ENCODE measurements at regions of chr10 and their contacts with region 1.

Region 1: DNA sequence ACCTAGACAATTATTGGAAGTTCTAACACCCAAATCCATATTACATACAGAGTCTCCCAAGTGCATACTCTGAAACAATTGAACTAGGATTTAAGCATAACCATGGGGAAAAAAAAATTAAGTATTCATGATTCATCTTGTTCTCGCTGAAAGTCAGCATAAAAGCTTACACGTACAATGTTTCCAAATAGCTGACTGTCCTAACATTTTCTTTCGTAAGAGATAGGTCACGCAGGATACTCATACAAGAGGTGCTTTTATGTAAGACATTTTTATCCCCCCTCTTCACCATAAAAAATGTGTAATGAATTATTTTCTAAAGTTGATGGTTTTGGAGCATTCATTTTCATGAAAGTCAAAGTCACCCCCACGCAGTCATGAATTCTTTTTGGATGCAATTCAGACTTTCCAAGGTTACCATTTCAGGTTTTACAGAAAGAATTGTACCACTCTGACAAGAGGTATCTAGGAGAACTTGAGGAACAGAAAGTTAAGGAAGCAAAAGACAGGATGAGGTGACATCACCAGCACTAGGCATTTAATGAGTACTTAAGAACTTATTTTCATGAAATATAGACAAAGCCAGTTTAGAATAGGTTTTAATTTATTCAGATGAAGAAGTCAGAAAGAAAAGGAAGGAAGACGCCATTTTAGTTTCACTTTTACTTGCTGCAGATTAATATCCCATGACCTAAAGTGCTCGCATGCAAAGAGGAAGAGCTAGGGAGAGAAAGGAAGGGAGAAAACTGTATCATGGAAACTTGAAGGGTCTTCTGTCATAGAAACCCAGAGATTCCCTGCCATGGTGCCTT is 55.8 kb downstream of the TMEM26 start:
- DNase-seq: peak; percentile 87 to 96 (median 94)
- H3K4me3 ChIP-seq: peak overlapping the region; percentile 23 to 61 (median 50)
- H3K4me3 Mint-ChIP-seq: peak overlapping the region; percentile 45 to 71
- H3K27ac ChIP-seq: peak overlapping the region; percentile 45 to 97
- H3K27ac Mint-ChIP-seq: peak overlapping the region; percentile 95 to 98 (median 97)
- H3K4me1 ChIP-seq: peaks cover 29% of the 10 kb centered on the region in 2 donors
- H3K4me1 Mint-ChIP-seq: peaks cover 32% of the 10 kb centered on the region
- H3K27me3 ChIP-seq: no peaks in the 10 kb centered on the region
- H3K27me3 Mint-ChIP-seq: no peaks in the 10 kb centered on the region
- CTCF ChIP-seq: no peak

Region 2: DNA sequence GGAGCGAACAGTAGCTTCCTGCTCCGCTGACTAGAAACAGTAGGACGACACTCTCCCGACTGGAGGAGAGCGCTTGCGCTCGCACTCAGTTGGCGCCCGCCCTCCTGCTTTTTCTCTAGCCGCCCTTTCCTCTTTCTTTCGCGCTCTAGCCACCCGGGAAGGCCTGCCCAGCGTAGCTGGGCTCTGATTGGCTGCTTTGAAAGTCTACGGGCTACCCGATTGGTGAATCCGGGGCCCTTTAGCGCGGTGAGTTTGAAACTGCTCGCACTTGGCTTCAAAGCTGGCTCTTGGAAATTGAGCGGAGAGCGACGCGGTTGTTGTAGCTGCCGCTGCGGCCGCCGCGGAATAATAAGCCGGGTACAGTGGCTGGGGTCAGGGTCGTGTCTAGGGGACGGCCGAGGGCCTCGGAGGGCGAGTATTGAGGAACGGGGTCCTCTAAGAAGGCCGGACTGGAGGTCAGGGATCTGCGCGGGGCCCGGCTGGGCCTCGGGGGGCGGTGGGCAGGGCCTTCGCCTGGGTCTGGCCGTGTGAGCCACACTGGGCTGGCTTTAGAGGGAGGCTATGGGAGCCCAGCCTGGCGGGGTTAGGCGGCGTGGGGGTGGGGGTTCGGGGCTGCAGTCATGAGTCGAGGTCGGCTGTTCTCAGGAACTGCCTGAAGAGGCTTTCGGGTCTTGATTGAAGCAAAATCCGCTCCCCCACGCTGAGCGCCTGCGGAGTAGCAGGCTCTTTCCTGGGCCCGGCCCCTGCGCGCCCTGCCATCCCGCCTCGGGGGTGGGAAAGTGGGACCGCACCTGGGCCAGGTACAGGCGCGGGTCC is 619.0 kb before region 1 on chr10 and contains the start of gene CDK1:
- intact Hi-C with region 1: loop called in 1 of 2 experiments (anchors 10 kb)
- DNase-seq: peak; percentile 90 to 96 (median 96)
- H3K4me3 ChIP-seq: peak within 1 kb of the TSS; percentile 66 to 95 (median 92)
- H3K4me3 Mint-ChIP-seq: peak within 1 kb of the TSS; percentile 93 to 97
- H3K27ac ChIP-seq: peak within 1 kb of the TSS in 1 of 2 donors; percentile 60
- H3K27ac Mint-ChIP-seq: peak within 1 kb of the TSS; percentile 54 to 91 (median 85)
- H3K4me1 ChIP-seq: peaks cover 19 to 20% of the 10 kb centered on the region in 2 donors
- H3K4me1 Mint-ChIP-seq: peaks cover 27% of the 10 kb centered on the region
- H3K27me3 ChIP-seq: no peaks in the 10 kb centered on the region
- H3K27me3 Mint-ChIP-seq: peaks cover 0 to 1% (median 0%) of the 10 kb centered on the region in 3 donors
- CTCF ChIP-seq: no peak
- polyA plus RNA-seq, gene CDK1: 0.08 to 0.21 (median 0.09) TPM

Region 3: DNA sequence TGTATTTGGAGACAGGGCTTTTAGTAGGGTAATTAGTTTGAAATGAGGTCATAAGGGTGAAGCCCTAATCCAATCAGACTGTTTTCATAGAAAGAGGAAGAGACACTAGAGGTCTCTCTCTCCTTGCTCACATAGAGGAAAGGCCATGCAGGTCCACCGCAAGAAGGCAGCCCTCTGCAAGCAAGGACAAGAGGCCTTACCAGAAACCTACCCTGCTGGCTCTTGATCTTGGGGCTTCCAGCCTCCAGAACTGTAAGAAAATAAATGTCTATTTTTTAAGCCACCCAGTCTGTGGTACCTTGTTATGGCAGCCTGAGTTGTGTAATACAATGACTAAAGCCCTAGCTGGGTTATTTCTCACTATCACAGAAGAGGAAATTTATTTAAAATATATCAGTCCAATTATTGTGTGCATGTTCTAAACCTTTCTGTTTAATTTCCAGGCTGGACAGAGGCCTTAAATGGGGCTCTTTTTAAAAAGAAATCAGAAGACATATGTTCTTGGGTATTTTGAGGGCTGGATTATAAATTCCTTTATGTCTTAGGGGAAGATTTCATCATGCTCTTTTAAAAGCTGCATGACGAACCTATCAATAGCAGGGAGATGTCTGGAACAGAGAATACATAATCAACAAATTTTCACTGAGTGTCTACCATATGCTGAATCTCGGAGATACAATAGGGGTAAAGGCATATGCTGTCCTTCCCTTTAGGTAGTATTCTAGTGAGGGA is 68.7 kb after region 1 on chr10:
- intact Hi-C with region 1: loop called (anchors 2 to 5 kb)
- DNase-seq: peak; percentile 23 to 71 (median 41)
- H3K4me3 ChIP-seq: no peak overlapping the region
- H3K4me3 Mint-ChIP-seq: no peak overlapping the region
- H3K27ac ChIP-seq: peak overlapping the region in 1 of 2 donors; percentile 55
- H3K27ac Mint-ChIP-seq: peak overlapping the region; percentile 51 to 90 (median 85)
- H3K4me1 ChIP-seq: peaks cover 20 to 23% of the 10 kb centered on the region in 2 donors
- H3K4me1 Mint-ChIP-seq: peaks cover 21% of the 10 kb centered on the region
- H3K27me3 ChIP-seq: no peaks in the 10 kb centered on the region
- H3K27me3 Mint-ChIP-seq: peaks cover 0 to 2% (median 2%) of the 10 kb centered on the region in 3 donors
- CTCF ChIP-seq: no peak

Region 4: GRCh38 chr10:61567729-61568128 is 170.3 kb after region 1 on chr10:
- intact Hi-C with region 1: no loop called
- DNase-seq: no peak
- H3K4me3 ChIP-seq: no peak overlapping the region
- H3K4me3 Mint-ChIP-seq: no peak overlapping the region
- H3K27ac ChIP-seq: no peak overlapping the region
- H3K27ac Mint-ChIP-seq: peak overlapping the region in 1 of 7 donors; percentile 28
- H3K4me1 ChIP-seq: no peaks in the 10 kb centered on the region
- H3K4me1 Mint-ChIP-seq: peaks cover 3% of the 10 kb centered on the region
- H3K27me3 ChIP-seq: no peaks in the 10 kb centered on the region
- H3K27me3 Mint-ChIP-seq: peaks cover 0 to 1% (median 1%) of the 10 kb centered on the region in 3 donors
- CTCF ChIP-seq: no peak

Measured in CD14-positive monocyte (primary cell).